ENCODE measurements at regions of chr5 and their contacts with region 1.

Region 1: DNA sequence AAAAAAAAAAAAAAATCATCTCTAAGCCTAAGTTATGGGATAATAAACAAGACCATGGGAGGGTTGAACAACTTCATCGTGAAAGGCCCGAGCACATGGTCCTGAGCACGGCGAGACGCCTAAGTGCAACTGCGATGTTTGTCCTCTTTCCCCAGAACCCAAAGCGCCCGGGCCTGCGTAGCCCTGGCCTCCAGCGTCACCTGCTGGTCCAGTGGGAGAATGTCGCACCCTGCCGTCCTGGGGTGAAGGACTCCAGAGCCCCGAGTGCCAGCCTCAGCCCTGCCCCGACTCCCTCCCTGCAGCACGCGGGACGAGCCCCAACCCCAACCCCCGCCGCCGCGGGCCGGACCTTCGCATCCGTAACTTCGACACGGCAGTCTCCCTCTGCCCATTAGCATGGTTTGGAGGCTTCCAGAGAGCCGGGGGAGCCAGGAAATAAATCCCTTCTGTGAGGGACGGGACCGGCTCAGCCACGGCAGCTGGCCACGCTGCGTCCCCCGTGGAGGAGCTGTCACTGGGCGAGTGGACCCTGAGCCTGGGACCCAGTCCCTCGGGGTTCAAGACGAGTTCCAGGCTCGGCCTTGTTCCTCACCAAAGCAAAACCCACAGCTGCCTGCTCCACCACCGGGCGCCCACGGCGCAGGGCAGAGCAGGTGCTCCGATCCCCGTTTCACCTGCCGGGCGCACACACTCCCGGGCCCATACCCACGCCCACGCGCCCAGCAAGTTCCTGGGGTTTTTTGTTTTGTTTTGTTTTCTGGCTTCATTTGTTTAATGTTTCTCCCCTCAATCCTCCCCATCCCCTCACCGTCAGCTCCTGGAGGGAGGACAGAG is 132.5 kb upstream of the HAND1 start:
- DNase-seq: peak; percentile 67
- H3K4me3 ChIP-seq: peak overlapping the region; percentile 30
- H3K27ac ChIP-seq: no peak overlapping the region
- H3K4me1 ChIP-seq: peaks cover 10% of the 10 kb centered on the region
- H3K27me3 ChIP-seq: peaks cover 25% of the 10 kb centered on the region
- CTCF ChIP-seq: peak; percentile 78

Region 2: DNA sequence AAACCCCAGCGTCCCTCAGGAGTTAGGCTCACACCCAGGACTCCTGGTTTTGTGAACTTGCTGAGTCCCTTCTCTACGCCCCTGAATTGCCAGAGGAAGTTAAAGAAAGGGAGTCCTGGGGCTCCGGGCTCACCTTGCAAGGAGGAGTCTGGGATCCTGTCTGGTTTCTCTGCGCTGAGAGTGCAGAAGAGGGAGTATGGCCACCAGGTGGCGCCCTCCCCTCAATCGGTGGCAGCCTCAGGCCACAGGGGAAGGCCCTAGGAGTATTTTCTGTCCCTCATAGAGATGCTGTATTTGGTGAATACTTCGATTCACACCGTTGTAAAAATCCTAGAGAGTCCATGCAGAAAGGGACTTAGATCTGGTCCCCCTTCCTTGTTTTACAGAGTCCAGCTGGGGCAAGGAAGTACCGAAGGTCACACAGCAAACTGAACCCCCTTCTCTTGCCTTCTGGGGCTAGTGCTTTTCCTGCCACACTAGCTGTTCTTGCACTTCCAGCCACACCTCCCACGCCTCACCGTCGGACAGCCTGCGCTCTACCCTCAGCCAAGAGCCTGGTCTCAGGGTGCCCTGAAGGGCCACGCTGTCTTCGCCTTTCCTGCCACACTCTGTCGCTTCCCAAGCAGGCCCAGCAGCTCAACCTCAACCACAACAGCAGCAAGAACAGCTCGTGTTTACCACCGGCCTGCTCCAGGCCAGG is 142.7 kb before region 1 on chr5:
- intact Hi-C with region 1: loop called (anchors 2 kb)
- DNase-seq: peak; percentile 79
- H3K4me3 ChIP-seq: no peak overlapping the region
- H3K27ac ChIP-seq: no peak overlapping the region
- H3K4me1 ChIP-seq: no peaks in the 10 kb centered on the region
- H3K27me3 ChIP-seq: peaks cover 28% of the 10 kb centered on the region
- CTCF ChIP-seq: peak; percentile 92

Region 3: GRCh38 chr5:154714266-154714986 is 103.9 kb after region 1 on chr5:
- intact Hi-C with region 1: no loop called
- DNase-seq: peak; percentile 60
- H3K4me3 ChIP-seq: peak overlapping the region; percentile 16
- H3K27ac ChIP-seq: peak overlapping the region; percentile 65
- H3K4me1 ChIP-seq: peaks cover 6% of the 10 kb centered on the region
- H3K27me3 ChIP-seq: no peaks in the 10 kb centered on the region
- CTCF ChIP-seq: no peak